ENCODE measurements at regions of chr1 and their contacts with region 1.

Region 1: DNA sequence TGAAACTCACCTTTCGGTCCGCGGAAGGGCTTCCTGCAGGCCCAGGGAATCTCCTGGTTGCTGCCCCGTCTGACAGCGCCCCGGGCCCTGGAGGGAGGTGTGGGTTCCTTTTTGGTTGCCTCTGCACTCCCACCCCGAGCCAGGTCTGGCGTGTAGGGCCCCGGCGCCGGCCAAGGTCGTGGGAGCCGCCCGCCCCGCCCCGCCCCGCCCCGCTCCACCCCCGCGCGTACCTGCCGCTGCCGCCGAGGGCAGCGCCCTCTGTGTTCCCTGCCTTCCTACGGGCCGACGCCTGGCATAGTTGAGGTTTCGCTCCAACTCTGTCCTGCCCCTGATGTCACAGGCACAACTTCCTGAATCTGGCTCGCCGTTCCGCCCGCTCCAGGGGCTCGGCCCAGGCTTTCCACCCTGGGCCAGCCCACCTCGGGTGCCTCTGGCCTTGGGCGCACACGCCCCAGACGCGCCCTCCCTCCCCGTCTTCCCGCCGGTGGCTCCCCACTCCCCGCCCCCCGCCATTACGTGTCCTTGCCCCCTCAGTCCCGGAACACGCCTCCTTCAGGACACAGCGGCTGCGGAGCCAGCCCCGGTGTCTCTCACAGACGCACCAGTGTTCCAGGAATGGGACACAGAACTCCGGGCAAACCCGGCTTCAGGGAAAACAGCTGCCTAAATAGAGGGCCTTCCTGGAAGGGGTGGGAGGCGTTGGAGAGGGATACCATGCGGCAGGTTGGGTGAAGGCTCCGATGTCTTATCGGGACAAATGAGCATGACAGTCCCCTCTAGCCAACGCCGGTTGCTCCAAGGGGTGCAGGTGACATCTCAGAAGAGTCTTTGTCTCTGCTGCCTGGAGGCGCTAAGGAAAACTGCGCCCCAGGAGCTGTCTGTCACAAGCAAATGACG is at the start of gene KIAA0040:
- DNase-seq: peak; percentile 77
- CTCF ChIP-seq: peak; percentile 46

Region 2: DNA sequence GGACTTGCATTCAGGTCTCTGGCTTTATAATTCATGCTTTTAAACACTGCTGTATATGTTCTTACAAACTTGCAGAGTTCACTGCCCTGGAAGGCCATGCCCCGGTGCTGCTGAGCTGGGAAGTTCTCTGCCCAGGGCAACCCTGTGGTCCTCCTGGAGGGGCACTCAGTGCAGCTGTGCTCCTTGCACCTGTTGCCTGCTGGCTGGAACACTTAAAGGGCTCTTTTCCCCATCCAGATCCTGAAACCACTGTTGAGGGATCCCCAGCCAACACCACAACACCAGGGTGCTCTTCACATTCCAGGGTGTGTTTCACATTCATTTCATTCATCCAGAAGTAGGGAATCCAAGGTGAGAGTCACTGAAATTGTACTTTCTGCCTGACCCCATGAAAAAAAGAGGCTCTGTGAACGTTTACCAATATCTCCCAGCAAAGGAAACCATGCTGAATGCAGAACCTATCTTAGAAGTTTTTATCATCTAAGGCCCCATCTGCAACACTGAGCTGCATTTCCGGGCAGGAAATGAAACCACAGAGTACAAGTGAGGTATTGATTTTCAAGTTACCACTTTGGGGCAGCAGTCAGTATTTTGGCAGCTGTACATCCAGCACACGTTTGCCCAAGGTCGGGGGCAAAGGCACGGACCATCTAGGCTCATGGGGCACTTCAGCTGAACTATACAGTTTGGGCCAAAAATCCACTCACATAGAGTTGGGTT is 16.1 kb after region 1 on chr1:
- CTCF ChIA-PET with region 1: interaction called, 10 read pairs
- POLR2A ChIA-PET with region 1: no interaction called
- DNase-seq: no peak
- CTCF ChIP-seq: no peak

Region 3: DNA sequence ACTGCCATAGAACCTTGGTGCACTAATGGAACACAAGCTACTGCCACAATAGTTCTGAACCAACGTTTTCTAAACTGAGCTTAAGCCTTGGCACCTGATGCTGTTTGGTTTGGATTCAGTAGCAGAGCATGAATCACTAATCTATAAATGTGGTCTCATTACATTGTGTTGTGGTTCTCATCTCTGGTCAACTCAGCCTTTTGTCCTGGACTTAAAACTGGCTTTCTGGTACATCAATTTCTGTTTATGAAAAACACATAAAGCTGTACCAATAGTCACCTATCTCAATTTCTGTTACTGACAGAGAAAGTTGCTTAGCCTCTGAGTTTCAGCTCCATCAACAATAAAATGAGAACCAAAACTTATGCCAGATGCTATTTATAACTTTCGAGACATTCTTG is 197.2 kb after region 1 on chr1:
- CTCF ChIA-PET with region 1: no interaction called
- POLR2A ChIA-PET with region 1: no interaction called
- DNase-seq: no peak
- CTCF ChIP-seq: no peak